ENCODE measurements at regions of chr1 and their contacts with region 1.

Region 1: GRCh38 chr1:92709738-92710137 is 75.2 kb downstream of the EVI5 start:
- DNase-seq: peak; percentile 52
- H3K4me3 Mint-ChIP-seq: no peak overlapping the region
- H3K27ac Mint-ChIP-seq: no peak overlapping the region
- H3K4me1 Mint-ChIP-seq: peaks cover 51% of the 10 kb centered on the region
- H3K27me3 Mint-ChIP-seq: no peaks in the 10 kb centered on the region
- CTCF ChIP-seq: no peak

Region 2: GRCh38 chr1:92698932-92699331 is 10.8 kb before region 1 on chr1:
- CTCF ChIA-PET with region 1: no interaction called
- intact Hi-C with region 1: no loop called
- DNase-seq: no peak
- H3K4me3 Mint-ChIP-seq: no peak overlapping the region
- H3K27ac Mint-ChIP-seq: no peak overlapping the region
- H3K4me1 Mint-ChIP-seq: no peaks in the 10 kb centered on the region
- H3K27me3 Mint-ChIP-seq: no peaks in the 10 kb centered on the region
- CTCF ChIP-seq: no peak

Region 3: DNA sequence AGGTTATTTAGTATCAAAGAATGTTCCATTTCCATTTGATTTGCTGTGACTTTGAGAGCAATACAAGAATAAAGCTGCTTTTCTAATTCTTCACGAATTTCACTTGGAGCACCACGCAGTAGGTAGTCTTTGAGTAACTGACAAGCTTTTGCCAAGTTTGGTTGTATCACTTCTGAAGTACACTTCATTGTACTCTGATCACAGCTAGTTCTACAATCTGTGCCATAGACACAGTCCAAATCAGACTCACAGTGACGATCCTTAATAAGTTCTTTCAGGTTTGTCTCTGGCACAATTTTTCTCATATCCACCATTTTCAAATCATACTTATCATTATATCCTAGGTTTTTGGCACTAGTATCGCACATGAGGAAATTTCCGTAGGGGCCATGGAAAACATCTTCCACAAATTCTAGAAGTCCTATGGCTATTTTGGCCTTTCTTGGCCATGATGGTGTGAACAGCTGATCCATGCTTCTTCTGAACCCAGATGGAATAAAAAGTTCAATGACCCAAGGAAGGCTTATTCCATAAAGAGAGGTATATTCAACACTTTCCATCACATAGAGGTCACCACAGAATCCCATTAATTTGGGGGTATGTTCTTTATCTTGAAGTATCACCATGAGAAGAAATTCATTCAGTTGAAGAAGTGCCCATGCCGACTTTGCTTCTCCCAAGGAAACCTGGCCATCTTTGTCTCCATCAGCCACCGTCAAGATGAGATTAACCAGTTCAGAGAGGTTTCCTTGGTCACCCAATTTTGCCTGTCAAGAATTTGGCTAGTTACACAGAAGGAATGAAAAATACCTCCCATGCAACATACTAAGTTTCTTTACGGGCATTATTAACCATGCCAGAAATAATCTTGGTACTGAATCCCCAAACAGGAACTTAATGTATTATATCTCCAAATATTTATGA is 134.0 kb after region 1 on chr1:
- CTCF ChIA-PET with region 1: interaction called, 10 read pairs
- intact Hi-C with region 1: no loop called
- DNase-seq: no peak
- H3K4me3 Mint-ChIP-seq: no peak overlapping the region
- H3K27ac Mint-ChIP-seq: no peak overlapping the region
- H3K4me1 Mint-ChIP-seq: peaks cover 17% of the 10 kb centered on the region
- H3K27me3 Mint-ChIP-seq: no peaks in the 10 kb centered on the region
- CTCF ChIP-seq: no peak